Colonic mucosa (tissue), 4 donors: ENCODE measurements at regions of chr5 and their contacts with region 1.

Region 1: DNA sequence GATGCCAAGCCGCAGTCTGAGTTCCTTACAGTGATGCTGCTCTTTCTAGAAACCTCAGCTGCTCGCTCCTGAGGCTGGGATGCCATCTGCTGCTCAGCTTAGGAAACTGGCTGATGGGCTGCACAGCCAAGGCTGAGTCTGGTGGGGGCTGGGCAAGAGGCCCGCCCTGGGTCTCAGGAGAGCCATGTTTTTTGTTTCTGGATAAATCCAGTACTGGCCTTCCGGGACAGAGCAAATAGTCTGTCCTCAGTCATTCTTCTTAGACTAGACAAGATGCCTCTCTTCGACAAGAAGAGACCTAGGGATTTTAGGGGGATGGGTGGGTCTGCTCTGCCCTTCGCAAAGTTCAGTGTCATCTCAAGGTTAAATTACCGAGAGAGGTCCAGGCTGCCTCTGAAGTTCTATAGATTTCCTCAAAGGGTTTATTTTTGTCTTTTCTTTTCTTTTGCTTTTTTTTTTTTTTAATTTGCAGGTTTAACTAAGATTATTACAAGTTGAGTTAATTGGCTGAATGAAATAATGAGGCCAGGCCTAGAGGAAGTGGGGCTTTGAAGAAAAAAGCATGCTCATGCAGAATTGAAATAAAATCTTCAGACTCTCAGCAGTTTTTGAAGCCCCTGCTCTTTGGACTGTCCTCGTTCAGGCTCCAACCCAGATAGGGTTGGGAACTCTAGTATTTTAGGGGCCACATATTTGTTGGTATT is 30.6 kb upstream of the MATR3 start:
- DNase-seq: peak; percentile 83
- H3K4me3 ChIP-seq: no peak overlapping the region
- H3K27ac ChIP-seq: no peak overlapping the region
- H3K4me1 ChIP-seq: no peaks in the 10 kb centered on the region
- H3K27me3 ChIP-seq: no peaks in the 10 kb centered on the region
- CTCF ChIP-seq: peak; percentile 79

Region 2: DNA sequence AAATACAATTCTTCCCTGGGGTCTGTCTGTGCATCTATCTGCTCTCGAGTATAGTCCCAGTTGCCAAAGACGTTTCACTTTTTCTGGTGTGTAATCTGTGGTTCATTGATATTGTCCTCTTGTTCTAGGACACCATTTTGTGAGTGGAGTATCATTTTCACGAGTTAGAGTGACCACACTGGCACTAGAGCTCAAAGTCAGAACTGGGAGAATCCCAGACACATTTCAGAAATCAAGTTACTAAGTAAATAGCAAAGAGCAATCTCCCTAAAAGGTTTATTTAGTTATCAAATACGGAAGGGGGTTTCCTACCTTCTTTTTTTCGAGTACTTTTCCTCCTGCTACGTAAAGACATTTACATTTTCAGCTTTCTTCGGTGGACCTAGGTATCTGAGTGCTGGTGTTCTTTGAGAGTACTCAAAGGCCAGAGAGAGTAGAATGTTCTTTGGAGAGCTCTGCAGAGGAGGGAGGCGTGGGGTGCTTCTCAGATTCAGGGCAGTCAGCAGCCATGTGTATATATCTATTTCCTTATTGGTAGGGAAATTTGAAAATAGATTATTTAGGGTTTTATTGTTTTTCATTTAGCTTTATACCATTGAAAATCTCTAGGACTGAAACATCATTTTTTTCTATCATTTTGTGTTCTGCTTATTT is 678.8 kb before region 1 on chr5:
- intact Hi-C with region 1: loop called (anchors 5 kb)
- DNase-seq: no peak
- H3K4me3 ChIP-seq: no peak overlapping the region
- H3K27ac ChIP-seq: no peak overlapping the region
- H3K4me1 ChIP-seq: no peaks in the 10 kb centered on the region
- H3K27me3 ChIP-seq: no peaks in the 10 kb centered on the region
- CTCF ChIP-seq: no peak

Region 3: GRCh38 chr5:138641547-138642298 is 621.2 kb before region 1 on chr5:
- intact Hi-C with region 1: loop called (anchors 5 kb)
- DNase-seq: peak; percentile 74
- H3K4me3 ChIP-seq: no peak overlapping the region
- H3K27ac ChIP-seq: no peak overlapping the region
- H3K4me1 ChIP-seq: no peaks in the 10 kb centered on the region
- H3K27me3 ChIP-seq: no peaks in the 10 kb centered on the region
- CTCF ChIP-seq: peak; percentile 76

Region 4: GRCh38 chr5:139091439-139092156 is 171.3 kb before region 1 on chr5:
- intact Hi-C with region 1: loop called (anchors 10 kb)
- DNase-seq: no peak
- H3K4me3 ChIP-seq: no peak overlapping the region
- H3K27ac ChIP-seq: no peak overlapping the region
- H3K4me1 ChIP-seq: no peaks in the 10 kb centered on the region
- H3K27me3 ChIP-seq: no peaks in the 10 kb centered on the region
- CTCF ChIP-seq: no peak